Activated naive CD4-positive, alpha-beta T cell treated with anti-CD3 and anti-CD28 coated beads, Interleukin-2, amount 10 ng/mL, durations not matched to agents 7 days and 5 days (primary cell): ENCODE measurements at regions of chr2 and their contacts with region 1.

Region 1: GRCh38 chr2:203909261-203909967 is 27.1 kb upstream of the ICOS start:
- DNase-seq: peak; percentile 45
- H3K4me3 Mint-ChIP-seq: peak overlapping the region; percentile 5
- H3K27ac Mint-ChIP-seq: no peak overlapping the region
- H3K4me1 Mint-ChIP-seq: peaks cover 19% of the 10 kb centered on the region
- H3K27me3 Mint-ChIP-seq: peaks cover 4% of the 10 kb centered on the region

Region 2: DNA sequence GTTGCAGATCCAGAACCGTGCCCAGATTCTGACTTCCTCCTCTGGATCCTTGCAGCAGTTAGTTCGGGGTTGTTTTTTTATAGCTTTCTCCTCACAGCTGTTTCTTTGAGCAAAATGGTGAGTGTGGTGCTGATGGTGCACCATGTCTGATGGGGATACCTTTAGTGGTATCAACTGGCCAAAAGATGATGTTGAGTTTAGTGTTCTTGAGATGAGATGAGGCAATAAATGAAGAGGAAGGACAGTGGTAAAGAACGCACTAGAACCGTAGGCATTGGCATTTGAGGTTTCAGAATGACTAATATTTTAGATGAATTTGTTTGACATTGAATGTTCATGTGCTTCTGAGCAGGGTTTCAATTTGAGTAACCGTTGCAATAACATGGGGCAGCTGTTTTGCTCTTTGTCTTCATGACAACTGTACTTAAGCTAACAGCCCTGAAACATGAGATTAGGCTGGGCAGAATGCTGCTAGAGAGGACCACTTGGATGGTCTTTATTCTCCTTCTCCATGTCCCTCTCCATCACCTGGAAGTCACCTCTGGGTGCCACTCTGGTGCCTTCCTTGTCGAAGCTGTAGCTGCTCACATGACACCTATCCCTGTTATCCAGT is 37.9 kb before region 1 on chr2:
- CTCF ChIA-PET with region 1: interaction called, 28 read pairs
- DNase-seq: peak; percentile 57
- H3K4me3 Mint-ChIP-seq: peak overlapping the region; percentile 83
- H3K27ac Mint-ChIP-seq: peak overlapping the region; percentile 98
- H3K4me1 Mint-ChIP-seq: peaks cover 86% of the 10 kb centered on the region
- H3K27me3 Mint-ChIP-seq: no peaks in the 10 kb centered on the region